HEK293 (cell line): ENCODE measurements at regions of chr11 and their contacts with region 1.

Region 1: DNA sequence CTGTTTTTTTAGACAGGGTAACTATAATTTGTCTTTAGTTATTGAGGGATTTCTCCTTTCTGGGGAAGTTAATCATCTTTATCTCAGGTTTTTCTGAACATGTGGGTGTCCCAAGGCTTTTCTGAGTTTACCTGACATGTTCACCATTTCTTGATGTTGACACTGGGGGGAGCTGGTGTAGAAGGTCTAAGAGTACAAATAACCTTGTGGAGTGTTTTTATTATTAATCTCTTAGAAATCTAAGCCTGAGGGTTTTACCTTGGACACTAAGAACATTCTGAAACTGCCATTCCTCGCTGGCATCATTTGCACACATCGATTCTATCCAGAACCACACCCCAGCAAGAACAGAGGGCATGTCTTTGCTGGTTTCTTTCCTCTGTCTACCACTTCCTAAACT is 15.6 kb upstream of the C11orf91 start:
- H3K4me3 ChIP-seq: no peak overlapping the region
- H3K27ac ChIP-seq: no peak overlapping the region
- H3K4me1 ChIP-seq: no peaks in the 10 kb centered on the region
- CTCF ChIP-seq: no peak

Region 2: GRCh38 chr11:33700425-33701271 is 15.6 kb before region 1 on chr11 and contains the start of gene C11orf91:
- CTCF ChIA-PET with region 1: interaction called, 16 read pairs
- POLR2A ChIA-PET with region 1: no interaction called
- H3K4me3 ChIP-seq: peak within 1 kb of the TSS; percentile 62
- H3K27ac ChIP-seq: no peak within 1 kb of the TSS
- H3K4me1 ChIP-seq: no peaks in the 10 kb centered on the region
- CTCF ChIP-seq: no peak

Region 3: GRCh38 chr11:33736148-33736809 is 20.0 kb after region 1 on chr11 and contains the start of gene CD59:
- CTCF ChIA-PET with region 1: interaction called, 4 read pairs
- POLR2A ChIA-PET with region 1: interaction called, 26 read pairs
- H3K4me3 ChIP-seq: peak within 1 kb of the TSS; percentile 86
- H3K27ac ChIP-seq: peak within 1 kb of the TSS; percentile 54; the same call in 1 of the 2 replicates
- H3K4me1 ChIP-seq: no peaks in the 10 kb centered on the region
- CTCF ChIP-seq: no peak

Region 4: GRCh38 chr11:33742249-33742851 is 26.1 kb after region 1 on chr11:
- CTCF ChIA-PET with region 1: interaction called, 40 read pairs
- POLR2A ChIA-PET with region 1: interaction called, 26 read pairs
- H3K4me3 ChIP-seq: no peak overlapping the region
- H3K27ac ChIP-seq: no peak overlapping the region
- H3K4me1 ChIP-seq: no peaks in the 10 kb centered on the region
- CTCF ChIP-seq: no peak

Region 5: GRCh38 chr11:33761471-33761870 is 45.2 kb after region 1 on chr11:
- CTCF ChIA-PET with region 1: no interaction called
- POLR2A ChIA-PET with region 1: no interaction called
- H3K4me3 ChIP-seq: no peak overlapping the region
- H3K27ac ChIP-seq: no peak overlapping the region
- H3K4me1 ChIP-seq: no peaks in the 10 kb centered on the region
- CTCF ChIP-seq: no peak

Region 6: DNA sequence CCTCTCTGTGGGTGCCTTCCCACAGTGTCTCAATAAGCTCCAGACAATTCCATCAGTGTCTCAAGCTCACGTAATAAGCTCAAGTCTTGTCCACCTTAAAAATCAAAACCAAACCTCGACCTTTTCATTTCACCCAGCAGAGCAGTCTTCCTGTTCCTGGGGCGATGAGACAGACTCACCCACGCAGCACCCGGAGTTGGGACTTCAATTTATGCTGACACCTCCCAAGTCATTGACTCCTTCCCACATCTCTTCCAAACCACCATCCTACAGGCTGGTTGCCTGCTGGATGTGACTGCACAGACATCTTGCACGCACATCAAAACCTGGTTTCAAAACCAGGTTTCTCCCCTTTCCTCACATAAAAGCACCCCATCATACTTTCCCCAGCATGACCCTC is 103.0 kb after region 1 on chr11:
- CTCF ChIA-PET with region 1: no interaction called
- POLR2A ChIA-PET with region 1: no interaction called
- H3K4me3 ChIP-seq: no peak overlapping the region
- H3K27ac ChIP-seq: no peak overlapping the region
- H3K4me1 ChIP-seq: no peaks in the 10 kb centered on the region
- CTCF ChIP-seq: no peak

Region 7: GRCh38 chr11:33829433-33830141 is 113.4 kb after region 1 on chr11:
- CTCF ChIA-PET with region 1: interaction called, 31 read pairs
- POLR2A ChIA-PET with region 1: no interaction called
- H3K4me3 ChIP-seq: peak overlapping the region; percentile 31
- H3K27ac ChIP-seq: no peak overlapping the region
- H3K4me1 ChIP-seq: no peaks in the 10 kb centered on the region
- CTCF ChIP-seq: peak; percentile 64; the same call in 1 of the 2 replicates